Activated CD8-positive, alpha-beta T cell treated with anti-CD3 and anti-CD28 coated beads, Interleukin-2, amount 10 ng/mL, durations not matched to agents 7 days and 5 days (primary cell): ENCODE measurements at regions of chr6 and their contacts with region 1.

Region 1: DNA sequence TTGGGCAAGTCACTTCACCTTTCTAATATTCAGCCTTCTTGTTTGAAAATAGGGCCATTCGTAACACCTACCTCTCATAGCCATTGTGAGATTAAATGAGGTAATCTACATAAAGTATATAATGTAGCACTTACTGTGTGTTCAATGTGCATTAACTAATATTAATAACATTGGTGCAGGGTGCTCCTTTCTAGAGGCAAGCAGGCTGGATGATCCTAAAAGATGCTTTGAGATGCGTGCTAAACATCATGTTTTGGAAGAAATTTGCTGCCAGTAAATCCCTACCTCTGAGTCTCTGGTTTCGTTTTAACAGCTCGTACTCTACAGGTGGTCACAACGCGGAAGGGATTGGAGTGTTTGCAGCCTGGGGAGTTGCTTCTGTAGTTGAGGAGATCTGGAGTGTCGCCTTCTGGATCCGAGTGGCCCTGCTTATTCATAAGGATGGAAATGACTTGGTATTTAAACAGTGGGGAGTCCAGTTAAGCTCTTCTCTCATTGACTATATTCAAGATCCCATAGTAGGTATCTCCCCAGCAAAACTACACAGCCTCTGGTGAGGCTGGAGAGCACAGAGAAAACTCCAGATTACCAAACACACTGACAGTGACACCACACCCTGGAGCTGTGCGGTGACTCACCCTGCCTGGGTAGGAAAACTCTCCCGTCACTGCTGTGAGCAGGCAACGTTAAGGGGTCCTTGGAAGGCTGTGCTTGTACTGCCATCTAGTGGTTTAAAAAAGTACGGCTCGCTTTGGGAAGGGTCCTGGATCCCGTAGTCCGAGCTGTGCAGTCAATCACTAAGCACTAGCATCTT is 107.9 kb downstream of the MAP3K7 start:
- DNase-seq: peak; percentile 86
- ATAC-seq: peak; percentile 94
- H3K4me3 Mint-ChIP-seq: no peak overlapping the region
- H3K27ac Mint-ChIP-seq: peak overlapping the region; percentile 15
- H3K4me1 Mint-ChIP-seq: peaks cover 57% of the 10 kb centered on the region
- H3K27me3 Mint-ChIP-seq: no peaks in the 10 kb centered on the region

Region 2: GRCh38 chr6:90107771-90108282 is 371.2 kb before region 1 on chr6:
- CTCF ChIA-PET with region 1: interaction called, 14 read pairs
- POLR2A ChIA-PET with region 1: no interaction called
- DNase-seq: peak; percentile 52
- ATAC-seq: peak; percentile 50
- H3K4me3 Mint-ChIP-seq: peak overlapping the region; percentile 30
- H3K27ac Mint-ChIP-seq: peak overlapping the region; percentile 60
- H3K4me1 Mint-ChIP-seq: peaks cover 93% of the 10 kb centered on the region
- H3K27me3 Mint-ChIP-seq: no peaks in the 10 kb centered on the region

Region 3: DNA sequence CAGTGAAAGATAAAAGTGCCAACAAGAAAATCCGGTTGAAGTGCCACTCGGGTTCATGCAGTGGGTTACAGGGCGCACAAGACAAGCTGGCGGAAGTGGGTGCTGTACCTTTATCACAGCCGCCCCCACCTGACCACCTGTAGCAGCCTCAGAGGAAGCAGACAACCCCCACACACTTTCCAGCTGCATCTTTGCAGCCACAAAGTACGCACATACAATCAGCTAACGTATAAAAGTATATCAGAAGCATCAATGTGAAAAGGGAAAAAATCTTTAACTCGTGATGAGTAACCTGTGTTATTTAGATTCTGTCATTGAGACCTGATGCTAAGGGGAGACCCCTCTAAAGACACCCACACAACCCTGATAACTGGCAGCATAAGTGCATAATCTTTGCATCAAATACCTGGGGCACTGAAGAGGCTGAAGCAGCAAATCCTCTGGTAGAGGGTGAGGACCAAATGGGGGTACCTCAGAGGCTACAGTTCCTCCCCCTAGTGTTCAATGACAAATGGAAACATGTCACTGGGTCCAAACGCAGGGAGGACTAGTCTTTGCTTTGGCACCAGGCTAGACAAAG is 204.5 kb before region 1 on chr6:
- CTCF ChIA-PET with region 1: interaction called, 10 read pairs
- POLR2A ChIA-PET with region 1: no interaction called
- DNase-seq: peak; percentile 94
- ATAC-seq: peak; percentile 87
- H3K4me3 Mint-ChIP-seq: peak overlapping the region; percentile 75
- H3K27ac Mint-ChIP-seq: peak overlapping the region; percentile 94
- H3K4me1 Mint-ChIP-seq: peaks cover 91% of the 10 kb centered on the region
- H3K27me3 Mint-ChIP-seq: no peaks in the 10 kb centered on the region

Region 4: DNA sequence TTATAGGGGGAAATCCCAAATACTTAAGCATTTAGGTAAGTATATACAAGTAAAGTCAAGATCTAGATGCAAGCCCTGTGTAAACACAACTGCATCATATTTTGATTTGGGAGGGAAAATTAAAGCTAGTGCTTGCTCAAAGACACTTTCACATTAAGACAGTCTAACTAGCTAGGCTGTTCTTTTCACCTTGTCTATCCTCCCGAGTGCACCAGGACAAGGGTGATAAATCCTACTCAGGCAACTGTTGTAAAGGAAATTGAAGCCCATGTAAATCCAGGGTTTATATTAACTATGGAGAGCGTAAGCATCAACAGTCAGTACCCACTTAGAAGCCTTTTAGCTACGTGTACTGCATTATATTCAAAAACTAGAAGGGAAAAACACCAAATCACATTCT is 163.0 kb before region 1 on chr6:
- CTCF ChIA-PET with region 1: no interaction called
- POLR2A ChIA-PET with region 1: no interaction called
- DNase-seq: no peak
- ATAC-seq: no peak
- H3K4me3 Mint-ChIP-seq: no peak overlapping the region
- H3K27ac Mint-ChIP-seq: no peak overlapping the region
- H3K4me1 Mint-ChIP-seq: peaks cover 9% of the 10 kb centered on the region
- H3K27me3 Mint-ChIP-seq: peaks cover 3% of the 10 kb centered on the region

Region 5: GRCh38 chr6:90403489-90404381 is 75.3 kb before region 1 on chr6:
- CTCF ChIA-PET with region 1: interaction called, 170 read pairs
- POLR2A ChIA-PET with region 1: interaction called, 29 read pairs
- DNase-seq: no peak
- ATAC-seq: no peak
- H3K4me3 Mint-ChIP-seq: no peak overlapping the region
- H3K27ac Mint-ChIP-seq: peak overlapping the region; percentile 85
- H3K4me1 Mint-ChIP-seq: peaks cover 75% of the 10 kb centered on the region
- H3K27me3 Mint-ChIP-seq: no peaks in the 10 kb centered on the region

Region 6: GRCh38 chr6:90458353-90459224 is 20.4 kb before region 1 on chr6:
- CTCF ChIA-PET with region 1: interaction called, 148 read pairs
- POLR2A ChIA-PET with region 1: interaction called, 19 read pairs
- DNase-seq: peak; percentile 71
- ATAC-seq: peak; percentile 86
- H3K4me3 Mint-ChIP-seq: peak overlapping the region; percentile 51
- H3K27ac Mint-ChIP-seq: peak overlapping the region; percentile 87
- H3K4me1 Mint-ChIP-seq: peaks cover 63% of the 10 kb centered on the region
- H3K27me3 Mint-ChIP-seq: no peaks in the 10 kb centered on the region